Activated naive CD4-positive, alpha-beta T cell treated with anti-CD3 and anti-CD28 coated beads for 36 hours (primary cell): ENCODE measurements at regions of chr7 and their contacts with region 1.

Region 1: GRCh38 chr7:8134089-8134733 is 127.8 kb downstream of the ICA1 start:
- DNase-seq: peak; percentile 71
- H3K4me3 Mint-ChIP-seq: peak overlapping the region; percentile 33
- H3K27ac Mint-ChIP-seq: peak overlapping the region; percentile 68
- H3K4me1 Mint-ChIP-seq: peaks cover 52% of the 10 kb centered on the region
- H3K27me3 Mint-ChIP-seq: no peaks in the 10 kb centered on the region

Region 2: GRCh38 chr7:7157177-7157886 is 976.9 kb before region 1 on chr7:
- CTCF ChIA-PET with region 1: no interaction called
- intact Hi-C with region 1: loop called (anchors 5 kb)
- DNase-seq: peak; percentile 67
- H3K4me3 Mint-ChIP-seq: peak overlapping the region; percentile 61
- H3K27ac Mint-ChIP-seq: peak overlapping the region; percentile 81
- H3K4me1 Mint-ChIP-seq: peaks cover 49% of the 10 kb centered on the region
- H3K27me3 Mint-ChIP-seq: no peaks in the 10 kb centered on the region

Region 3: GRCh38 chr7:7672545-7673239 is 461.5 kb before region 1 on chr7:
- CTCF ChIA-PET with region 1: no interaction called
- intact Hi-C with region 1: loop called (anchors 1 kb)
- DNase-seq: peak; percentile 64
- H3K4me3 Mint-ChIP-seq: peak overlapping the region; percentile 31
- H3K27ac Mint-ChIP-seq: peak overlapping the region; percentile 79
- H3K4me1 Mint-ChIP-seq: peaks cover 45% of the 10 kb centered on the region
- H3K27me3 Mint-ChIP-seq: no peaks in the 10 kb centered on the region

Region 4: DNA sequence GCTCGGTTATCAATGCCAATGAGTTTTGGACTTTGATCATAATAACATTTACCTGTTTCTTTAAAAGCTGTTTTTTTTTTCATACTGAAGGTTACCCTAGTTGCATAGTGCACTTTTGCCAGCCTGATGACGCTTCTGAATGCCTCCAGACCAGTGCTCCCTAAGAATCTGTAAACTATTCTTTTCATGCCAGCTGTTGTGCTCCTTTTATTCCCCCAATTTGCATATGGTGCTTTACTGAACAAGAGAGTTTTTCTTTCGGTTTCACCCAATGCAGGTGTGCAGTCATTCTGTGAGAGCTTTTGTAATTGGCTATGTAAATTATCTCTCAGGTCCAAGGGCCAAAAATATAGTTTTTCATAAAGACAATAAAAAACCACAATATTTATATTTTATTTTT is 213.7 kb before region 1 on chr7:
- CTCF ChIA-PET with region 1: no interaction called
- intact Hi-C with region 1: loop called (anchors 2 kb)
- DNase-seq: peak; percentile 46
- H3K4me3 Mint-ChIP-seq: no peak overlapping the region
- H3K27ac Mint-ChIP-seq: no peak overlapping the region
- H3K4me1 Mint-ChIP-seq: peaks cover 24% of the 10 kb centered on the region
- H3K27me3 Mint-ChIP-seq: no peaks in the 10 kb centered on the region

Region 5: GRCh38 chr7:8042796-8043535 is 91.2 kb before region 1 on chr7:
- CTCF ChIA-PET with region 1: no interaction called
- intact Hi-C with region 1: loop called (anchors 2 kb)
- DNase-seq: no peak
- H3K4me3 Mint-ChIP-seq: no peak overlapping the region
- H3K27ac Mint-ChIP-seq: peak overlapping the region; percentile 82
- H3K4me1 Mint-ChIP-seq: peaks cover 72% of the 10 kb centered on the region
- H3K27me3 Mint-ChIP-seq: no peaks in the 10 kb centered on the region